H1 (cell line): ENCODE measurements at regions of chr3 and their contacts with region 1.

Region 1: DNA sequence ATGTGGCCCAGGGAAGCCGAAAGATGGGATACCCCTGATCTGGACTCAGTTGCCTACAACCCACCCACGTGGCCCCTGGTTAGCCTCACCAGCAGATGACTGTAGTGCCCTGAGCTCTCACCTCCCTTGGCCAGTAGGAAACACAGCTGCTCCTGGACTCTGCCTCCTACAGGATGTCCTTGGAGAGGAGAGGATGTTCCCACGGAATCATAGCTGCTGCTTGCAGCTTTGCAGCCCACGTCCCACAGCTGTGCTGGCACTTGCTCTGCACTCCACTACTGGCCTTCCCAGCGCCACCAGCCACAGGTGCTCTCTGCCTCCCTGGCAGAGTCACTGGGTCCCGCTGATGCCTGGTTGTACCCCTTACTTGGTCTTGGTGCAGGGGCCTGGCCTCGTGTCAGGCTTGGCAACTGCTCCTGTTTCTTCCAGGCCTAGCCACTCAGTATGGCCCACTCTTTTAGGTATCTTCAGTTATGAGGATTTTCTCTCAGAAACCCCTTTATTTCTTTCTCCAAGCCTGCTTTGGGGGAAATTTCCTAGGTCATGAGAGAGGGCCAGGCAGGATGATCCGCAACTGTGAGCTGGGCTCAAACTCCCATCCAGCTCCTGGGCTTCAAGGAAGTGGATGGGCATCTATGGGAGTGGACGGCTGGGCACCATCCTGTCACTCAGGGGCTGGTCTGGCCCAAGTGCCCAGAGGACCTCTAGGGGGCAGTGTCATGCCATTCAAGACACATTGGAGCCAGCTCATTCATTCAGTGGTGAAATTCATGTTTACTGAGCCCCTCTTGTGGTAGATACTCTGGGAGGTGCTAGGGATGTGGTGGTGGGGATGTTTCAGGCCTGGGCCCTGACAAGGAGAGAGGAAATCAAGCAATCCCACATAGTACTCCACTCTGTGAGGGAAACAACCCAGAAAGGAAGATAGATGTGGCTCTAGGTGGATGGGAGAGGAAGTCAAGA is 16.2 kb upstream of the VILL start:
- DNase-seq: peak in 1 of 2 experiments; percentile 83
- H3K4me3 ChIP-seq: no peak overlapping the region
- H3K27ac ChIP-seq: no peak overlapping the region
- H3K4me1 ChIP-seq: peaks cover 0 to 3% (median 0%) of the 10 kb centered on the region in 4 experiments; a peak in 1 of 7 replicates
- H3K27me3 ChIP-seq: no peaks in the 10 kb centered on the region
- CTCF ChIP-seq: peak; percentile 85 to 96 (median 94)
- EP300 ChIP-seq: no peak
- POLR2A ChIP-seq: no peak
- RAD21 ChIP-seq: peak; percentile 84 to 87

Region 2: GRCh38 chr3:37945807-37946530 is 28.4 kb before region 1 on chr3:
- CTCF ChIA-PET with region 1: interaction called, 13 read pairs
- POLR2A ChIA-PET with region 1: no interaction called
- DNase-seq: peak in 1 of 2 experiments; percentile 42
- H3K4me3 ChIP-seq: no peak overlapping the region
- H3K27ac ChIP-seq: no peak overlapping the region
- H3K4me1 ChIP-seq: peaks cover 0 to 6% (median 2%) of the 10 kb centered on the region in 4 experiments; a peak in 3 of 7 replicates
- H3K27me3 ChIP-seq: no peaks in the 10 kb centered on the region
- CTCF ChIP-seq: no peak
- EP300 ChIP-seq: no peak
- POLR2A ChIP-seq: no peak
- RAD21 ChIP-seq: no peak

Region 3: DNA sequence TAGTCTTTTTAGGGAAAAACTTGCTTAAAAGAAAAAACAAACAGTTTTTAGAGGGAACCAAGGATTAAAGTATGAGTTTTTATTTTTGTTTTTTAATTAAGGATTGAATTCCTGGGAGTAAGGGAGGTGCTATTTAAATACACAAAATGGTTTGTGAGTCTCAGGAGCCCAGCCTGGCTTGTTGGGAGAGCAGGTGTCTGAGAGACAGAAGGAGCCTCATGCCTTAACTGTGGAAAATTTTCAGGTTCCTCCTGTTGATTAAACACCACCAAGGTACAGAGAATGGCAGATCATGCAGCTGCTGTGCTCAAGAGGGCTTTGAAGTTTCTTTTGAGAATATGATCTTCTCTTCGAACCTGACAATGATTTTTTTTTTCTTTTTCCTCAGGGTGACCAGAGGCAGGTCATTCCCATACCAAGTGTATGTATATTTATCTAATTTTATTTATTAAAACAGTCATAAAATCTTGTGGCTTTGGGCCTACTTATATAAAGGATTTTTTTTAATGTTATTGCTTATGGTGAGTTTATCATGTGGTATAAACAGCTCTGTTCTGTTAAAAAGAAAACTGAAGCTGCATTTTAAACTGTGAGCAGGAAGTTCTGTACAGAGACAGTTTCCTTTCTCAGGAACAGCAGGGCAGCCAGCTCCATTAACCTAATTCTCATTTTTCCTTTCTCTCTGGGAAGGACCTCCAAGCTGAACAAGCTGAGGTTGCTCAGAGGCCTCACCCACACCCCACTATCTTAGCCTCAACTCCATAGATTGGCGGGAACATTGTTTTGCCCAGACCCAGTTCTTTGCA is 17.5 kb before region 1 on chr3:
- CTCF ChIA-PET with region 1: interaction called, 60 read pairs
- POLR2A ChIA-PET with region 1: no interaction called
- DNase-seq: no peak
- H3K4me3 ChIP-seq: no peak overlapping the region
- H3K27ac ChIP-seq: 0 out of 2 replicates have a peak overlapping the region, but pooled peaks have one; percentile 38
- H3K4me1 ChIP-seq: peaks cover 0 to 11% (median 7%) of the 10 kb centered on the region in 4 experiments; a peak in 3 of 7 replicates
- H3K27me3 ChIP-seq: no peaks in the 10 kb centered on the region
- CTCF ChIP-seq: no peak
- EP300 ChIP-seq: no peak
- POLR2A ChIP-seq: no peak
- RAD21 ChIP-seq: no peak

Region 4: DNA sequence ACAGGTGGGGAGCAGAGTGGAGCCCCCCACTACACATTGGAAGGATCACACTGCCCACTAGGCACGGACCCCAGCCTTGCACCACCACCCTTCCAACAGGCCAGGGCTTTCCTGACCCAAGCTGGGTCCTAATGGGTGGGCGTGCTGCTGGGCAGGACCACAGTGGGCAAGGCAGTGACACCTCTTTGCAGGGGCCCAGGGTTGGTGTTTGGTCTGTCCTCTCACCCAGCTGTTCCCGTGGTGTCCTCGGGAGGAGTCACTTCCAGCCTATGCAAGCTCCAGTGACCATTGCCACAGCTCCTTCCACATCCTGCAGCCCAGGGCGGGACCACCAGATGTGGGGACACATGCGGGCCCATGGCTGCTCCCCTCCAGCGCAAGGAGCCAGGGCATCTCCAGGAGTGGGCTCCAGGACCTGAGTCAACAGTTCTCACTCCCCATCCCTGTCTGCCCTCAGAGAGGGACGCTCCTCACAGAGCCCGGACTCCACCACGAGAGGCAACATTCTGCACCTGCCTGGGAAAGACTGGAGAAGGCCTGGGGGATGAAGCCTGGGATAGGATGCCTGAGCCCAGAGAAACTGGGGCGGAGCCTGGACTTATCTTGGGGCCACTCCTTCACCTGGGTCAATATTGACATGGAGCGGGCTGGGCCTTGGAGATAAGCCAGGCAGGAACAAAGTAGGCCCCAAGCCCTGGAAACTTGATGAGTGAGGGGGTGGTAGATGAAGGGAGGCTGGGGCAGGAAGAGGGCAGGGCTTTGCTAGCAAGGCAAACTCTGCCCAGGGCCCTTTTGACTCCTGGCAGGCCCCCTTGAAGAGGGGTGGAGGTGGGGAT is 12.3 kb after region 1 on chr3:
- CTCF ChIA-PET with region 1: interaction called, 134 read pairs
- POLR2A ChIA-PET with region 1: interaction called, 7 read pairs
- DNase-seq: no peak
- H3K4me3 ChIP-seq: no peak overlapping the region
- H3K27ac ChIP-seq: no peak overlapping the region
- H3K4me1 ChIP-seq: peaks cover 0 to 9% (median 6%) of the 10 kb centered on the region in 4 experiments; a peak in 5 of 7 replicates
- H3K27me3 ChIP-seq: peaks cover 0 to 2% (median 0%) of the 10 kb centered on the region in 4 experiments; a peak in 2 of 7 replicates
- CTCF ChIP-seq: no peak
- EP300 ChIP-seq: no peak
- POLR2A ChIP-seq: no peak
- RAD21 ChIP-seq: no peak

Region 5: DNA sequence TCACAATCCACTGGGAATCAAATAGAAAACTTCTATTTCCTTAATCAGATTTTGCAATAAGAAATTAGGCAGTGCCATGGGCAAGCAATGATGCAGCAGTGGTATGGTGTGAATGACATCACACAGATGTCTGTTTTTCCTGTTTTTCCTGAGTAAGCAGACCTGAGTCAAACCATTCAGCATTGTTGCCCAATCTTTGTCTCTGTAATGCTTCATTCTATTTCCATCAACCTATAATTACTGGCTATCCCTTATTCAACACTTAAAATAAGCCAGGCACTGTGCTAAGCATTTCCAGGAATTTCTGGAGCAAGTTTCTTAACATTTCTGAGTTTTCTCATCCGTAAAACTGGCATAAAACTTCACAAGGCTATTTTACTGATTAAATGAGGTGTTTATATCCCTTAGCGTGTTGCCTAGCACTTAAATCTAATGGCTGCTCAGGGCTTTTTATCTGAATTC is 179.7 kb after region 1 on chr3:
- CTCF ChIA-PET with region 1: no interaction called
- POLR2A ChIA-PET with region 1: no interaction called
- DNase-seq: no peak
- H3K4me3 ChIP-seq: no peak overlapping the region
- H3K27ac ChIP-seq: no peak overlapping the region
- H3K4me1 ChIP-seq: no peaks in the 10 kb centered on the region
- H3K27me3 ChIP-seq: no peaks in the 10 kb centered on the region
- CTCF ChIP-seq: no peak
- EP300 ChIP-seq: no peak
- POLR2A ChIP-seq: no peak
- RAD21 ChIP-seq: no peak

Region 6: GRCh38 chr3:38334142-38335055 is 360.0 kb after region 1 on chr3:
- CTCF ChIA-PET with region 1: no interaction called
- POLR2A ChIA-PET with region 1: no interaction called
- DNase-seq: no peak
- H3K4me3 ChIP-seq: no peak overlapping the region
- H3K27ac ChIP-seq: no peak overlapping the region
- H3K4me1 ChIP-seq: no peaks in the 10 kb centered on the region
- H3K27me3 ChIP-seq: no peaks in the 10 kb centered on the region; a peak in 2 of 7 replicates
- CTCF ChIP-seq: no peak
- EP300 ChIP-seq: no peak
- POLR2A ChIP-seq: no peak
- RAD21 ChIP-seq: no peak